ENCODE measurements at regions of chr2 and their contacts with region 1.

Region 1: GRCh38 chr2:66962625-66963207 is 434.4 kb upstream of the ETAA1 start:
- DNase-seq: no peak
- H3K4me3 ChIP-seq: no peak overlapping the region
- H3K27ac ChIP-seq: no peak overlapping the region
- H3K27me3 ChIP-seq: peaks cover 0 to 7% (median 0%) of the 10 kb centered on the region in 45 donors
- CTCF ChIP-seq: no peak

Region 2: GRCh38 chr2:66984864-66985263 is 22.1 kb after region 1 on chr2:
- intact Hi-C with region 1: loop called in 1 of 2 experiments (anchors 2 kb)
- DNase-seq: no peak
- H3K4me3 ChIP-seq: no peak overlapping the region
- H3K27ac ChIP-seq: no peak overlapping the region
- H3K27me3 ChIP-seq: peaks cover 0 to 3% (median 0%) of the 10 kb centered on the region in 45 donors
- CTCF ChIP-seq: no peak

Measured in dorsolateral prefrontal cortex (tissue), 120 donors.